PC-9 (cell line): ENCODE measurements at regions of chr2 and their contacts with region 1.

Region 1: DNA sequence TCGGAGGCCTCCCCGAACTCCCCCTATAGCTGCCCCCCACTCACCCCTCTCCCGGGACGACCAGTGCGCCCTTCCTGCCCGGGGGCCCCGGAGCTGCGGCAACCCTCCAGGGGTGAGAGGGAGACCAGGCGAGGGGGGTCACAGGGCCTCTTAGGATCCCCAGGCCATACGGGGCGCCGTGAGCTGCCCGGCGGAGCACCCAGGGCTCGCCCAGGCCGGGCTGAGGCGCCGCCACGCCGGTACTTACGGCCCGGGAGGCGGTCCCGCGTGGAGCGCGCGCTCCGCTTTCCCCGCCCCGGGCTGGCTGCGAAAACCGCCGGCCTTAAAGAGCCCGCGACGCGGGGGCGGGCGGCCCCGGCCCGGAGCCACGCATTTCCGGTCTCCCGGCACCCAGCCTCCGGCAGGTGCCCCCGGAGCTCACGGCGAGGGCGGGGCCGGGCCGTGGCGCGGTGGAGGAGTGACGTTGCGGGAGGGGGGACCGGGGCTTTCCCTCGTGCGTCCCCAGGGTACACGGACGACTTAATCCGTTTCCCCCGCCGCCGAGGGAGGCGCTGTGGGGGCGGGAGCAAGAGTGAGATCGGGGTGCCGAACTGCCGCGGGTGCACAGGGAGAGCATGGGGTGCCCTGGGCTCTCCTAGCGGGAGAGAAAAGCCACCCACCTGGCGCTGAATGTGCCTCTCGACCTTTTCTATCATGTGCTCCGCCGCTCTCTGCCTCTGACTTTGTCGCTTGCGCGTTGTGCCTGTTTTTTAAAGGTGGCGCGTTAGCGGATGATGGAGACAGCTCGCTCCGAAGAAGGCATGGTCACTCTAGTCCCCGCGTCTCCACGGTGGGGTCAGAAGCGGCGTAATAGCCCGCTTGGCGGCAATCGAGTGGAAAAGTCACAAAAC is at the start of gene METTL21A:
- DNase-seq: peak; percentile 71 to 81
- H3K4me3 ChIP-seq: peak within 1 kb of the TSS; percentile 85
- H3K27ac ChIP-seq: peak within 1 kb of the TSS; percentile 85
- H3K4me1 ChIP-seq: peaks cover 13% of the 10 kb centered on the region
- H3K27me3 ChIP-seq: no peaks in the 10 kb centered on the region
- CTCF ChIP-seq: no peak
- total RNA-seq, gene METTL21A: 11.7 and 13.6 TPM in 2 replicates

Region 2: DNA sequence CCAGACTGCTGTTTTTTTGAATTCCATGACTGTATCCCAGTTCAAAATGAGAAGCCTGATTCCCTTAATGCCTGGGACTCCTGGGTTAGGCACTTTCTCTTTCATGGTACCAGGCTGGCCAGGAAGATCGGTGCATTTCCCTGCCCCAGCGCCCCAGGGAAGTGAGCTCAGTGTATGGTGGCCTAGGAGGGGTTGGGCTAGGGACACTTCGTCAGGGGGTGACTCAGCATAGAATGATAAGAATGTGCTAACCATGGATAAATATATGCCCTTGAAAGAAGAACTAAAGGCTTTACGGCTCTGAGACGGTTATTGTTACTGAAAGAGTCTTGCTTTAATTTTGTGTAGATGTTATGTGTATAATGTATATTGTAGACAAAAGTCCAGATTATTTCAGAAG is 1010.4 kb before region 1 on chr2:
- CTCF ChIA-PET with region 1: no interaction called
- POLR2A ChIA-PET with region 1: interaction called, 15 read pairs
- intact Hi-C with region 1: no loop called
- DNase-seq: peak in 1 of 2 experiments; percentile 51
- H3K4me3 ChIP-seq: no peak overlapping the region
- H3K27ac ChIP-seq: no peak overlapping the region
- H3K4me1 ChIP-seq: no peaks in the 10 kb centered on the region; the same call in 1 of the 2 replicates
- H3K27me3 ChIP-seq: no peaks in the 10 kb centered on the region
- CTCF ChIP-seq: no peak

Region 3: GRCh38 chr2:207734264-207734635 is 109.0 kb after region 1 on chr2:
- CTCF ChIA-PET with region 1: interaction called, 4 read pairs
- POLR2A ChIA-PET with region 1: no interaction called
- intact Hi-C with region 1: loop called (anchors 2 kb)
- DNase-seq: peak in 1 of 2 experiments; percentile 38
- H3K4me3 ChIP-seq: no peak overlapping the region
- H3K27ac ChIP-seq: no peak overlapping the region
- H3K4me1 ChIP-seq: no peaks in the 10 kb centered on the region
- H3K27me3 ChIP-seq: no peaks in the 10 kb centered on the region
- CTCF ChIP-seq: peak; percentile 63